ENCODE measurements at regions of chr13 and their contacts with region 1.

Region 1: GRCh38 chr13:68026077-68026476 is 795.9 kb upstream of the PCDH9 start:
- DNase-seq: no peak
- ATAC-seq: peak in 1 of 8 donors; percentile 31
- H3K4me3 ChIP-seq: peak overlapping the region in 4 of 10 donors; percentile 6 to 31 (median 18)
- H3K27ac ChIP-seq: peak overlapping the region in 5 of 10 donors; percentile 10 to 63 (median 32)
- H3K4me1 ChIP-seq: peaks cover 0 to 11% (median 0%) of the 10 kb centered on the region in 9 donors
- H3K27me3 ChIP-seq: no peaks in the 10 kb centered on the region
- CTCF ChIP-seq: no peak

Region 2: GRCh38 chr13:67986234-67986633 is 39.8 kb before region 1 on chr13:
- intact Hi-C with region 1: loop called in 1 of 10 experiments (anchors 1 kb)
- DNase-seq: no peak
- ATAC-seq: no peak
- H3K4me3 ChIP-seq: no peak overlapping the region
- H3K27ac ChIP-seq: no peak overlapping the region
- H3K4me1 ChIP-seq: no peaks in the 10 kb centered on the region
- H3K27me3 ChIP-seq: no peaks in the 10 kb centered on the region
- CTCF ChIP-seq: no peak